ENCODE measurements at regions of chr11 and their contacts with region 1.

Region 1: DNA sequence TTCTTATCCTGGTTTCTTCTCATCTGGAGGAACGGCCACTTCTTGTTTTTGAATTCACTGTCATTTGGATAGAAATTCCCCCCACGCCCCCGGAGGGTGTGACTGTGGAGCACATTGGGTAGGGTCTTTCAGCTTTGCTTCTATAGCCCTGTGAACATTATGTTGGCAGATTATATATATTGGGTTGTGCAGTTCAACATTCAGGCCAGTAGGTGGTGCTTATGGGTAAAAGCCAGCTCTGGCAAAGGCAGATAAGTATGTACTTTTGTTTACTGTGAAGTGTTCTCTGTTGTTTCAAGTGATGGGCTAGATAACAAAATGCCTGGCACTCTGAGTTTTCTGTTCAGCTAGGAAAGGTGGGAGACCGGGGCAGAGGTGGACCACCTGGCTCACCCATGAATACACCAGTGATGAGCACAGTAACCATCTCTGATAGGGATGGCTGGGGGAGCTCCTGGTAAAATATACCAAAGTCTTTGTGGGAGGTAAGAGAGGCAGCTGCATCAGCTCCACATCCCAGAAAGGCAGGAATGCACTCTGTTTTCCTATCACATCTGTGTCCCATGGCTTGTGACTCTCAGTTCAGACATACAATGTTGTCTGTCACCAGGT is 1348.2 kb upstream of the RAG2 start:
- DNase-seq: peak in 2 of 6 donors; percentile 7 to 50
- ATAC-seq: peak; percentile 56 to 90 (median 79)
- H3K4me3 ChIP-seq: no peak overlapping the region
- H3K27ac ChIP-seq: no peak overlapping the region
- H3K4me1 ChIP-seq: no peaks in the 10 kb centered on the region
- H3K27me3 ChIP-seq: no peaks in the 10 kb centered on the region
- CTCF ChIP-seq: peak; percentile 52 to 76 (median 56)

Region 2: GRCh38 chr11:37671321-37671720 is 274.9 kb before region 1 on chr11:
- intact Hi-C with region 1: no loop called
- DNase-seq: no peak
- ATAC-seq: no peak
- H3K4me3 ChIP-seq: no peak overlapping the region
- H3K27ac ChIP-seq: no peak overlapping the region
- H3K4me1 ChIP-seq: no peaks in the 10 kb centered on the region
- H3K27me3 ChIP-seq: no peaks in the 10 kb centered on the region
- CTCF ChIP-seq: no peak

Region 3: GRCh38 chr11:38791302-38791961 is 845.2 kb after region 1 on chr11:
- intact Hi-C with region 1: loop called in 1 of 3 experiments (anchors 10 kb)
- DNase-seq: peak in 3 of 6 donors; percentile 9 to 41 (median 29)
- ATAC-seq: peak in 3 of 4 donors; percentile 71 to 75 (median 73)
- H3K4me3 ChIP-seq: no peak overlapping the region
- H3K27ac ChIP-seq: no peak overlapping the region
- H3K4me1 ChIP-seq: no peaks in the 10 kb centered on the region
- H3K27me3 ChIP-seq: no peaks in the 10 kb centered on the region
- CTCF ChIP-seq: peak; percentile 46 to 79 (median 71)